ENCODE measurements at regions of chr11 and their contacts with region 1.

Region 1: GRCh38 chr11:133134314-133135173 is 397.8 kb downstream of the OPCML start:
- DNase-seq: peak; percentile 0
- H3K4me3 Mint-ChIP-seq: no peak overlapping the region
- H3K27ac Mint-ChIP-seq: no peak overlapping the region
- H3K4me1 Mint-ChIP-seq: no peaks in the 10 kb centered on the region
- H3K27me3 Mint-ChIP-seq: no peaks in the 10 kb centered on the region
- CTCF ChIP-seq: peak; percentile 57

Region 2: GRCh38 chr11:132948252-132948651 is 186.3 kb before region 1 on chr11:
- CTCF ChIA-PET with region 1: no interaction called
- POLR2A ChIA-PET with region 1: no interaction called
- intact Hi-C with region 1: no loop called
- DNase-seq: no peak
- H3K4me3 Mint-ChIP-seq: no peak overlapping the region
- H3K27ac Mint-ChIP-seq: no peak overlapping the region
- H3K4me1 Mint-ChIP-seq: no peaks in the 10 kb centered on the region
- H3K27me3 Mint-ChIP-seq: no peaks in the 10 kb centered on the region
- CTCF ChIP-seq: no peak

Region 3: DNA sequence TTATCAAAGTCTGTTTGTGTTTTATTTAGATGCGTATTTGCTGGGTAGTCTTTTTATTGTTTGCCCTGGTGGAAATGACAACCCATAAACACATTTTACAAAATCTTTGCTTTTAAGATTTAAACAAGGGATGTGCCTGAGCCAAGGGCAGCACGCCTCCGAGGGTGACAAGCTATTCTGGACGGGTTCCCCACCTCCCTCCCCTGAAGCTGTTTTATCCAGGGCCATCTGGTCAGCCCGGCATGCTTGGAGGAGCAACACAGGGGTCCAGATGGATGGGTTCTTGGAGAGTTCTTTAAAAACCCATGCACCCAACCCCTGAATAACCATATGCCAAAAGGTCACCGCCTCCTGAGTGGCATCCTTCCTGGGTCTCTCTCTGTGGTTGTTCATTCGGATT is 11.2 kb before region 1 on chr11:
- CTCF ChIA-PET with region 1: interaction called, 12 read pairs
- POLR2A ChIA-PET with region 1: no interaction called
- intact Hi-C with region 1: no loop called
- DNase-seq: no peak
- H3K4me3 Mint-ChIP-seq: no peak overlapping the region
- H3K27ac Mint-ChIP-seq: no peak overlapping the region
- H3K4me1 Mint-ChIP-seq: no peaks in the 10 kb centered on the region
- H3K27me3 Mint-ChIP-seq: no peaks in the 10 kb centered on the region
- CTCF ChIP-seq: no peak

Region 4: GRCh38 chr11:133156986-133157745 is 22.6 kb after region 1 on chr11:
- CTCF ChIA-PET with region 1: interaction called, 19 read pairs
- POLR2A ChIA-PET with region 1: no interaction called
- intact Hi-C with region 1: no loop called
- DNase-seq: no peak
- H3K4me3 Mint-ChIP-seq: no peak overlapping the region
- H3K27ac Mint-ChIP-seq: no peak overlapping the region
- H3K4me1 Mint-ChIP-seq: no peaks in the 10 kb centered on the region
- H3K27me3 Mint-ChIP-seq: peaks cover 28% of the 10 kb centered on the region
- CTCF ChIP-seq: no peak

Region 5: GRCh38 chr11:133821776-133822175 is 687.2 kb after region 1 on chr11:
- CTCF ChIA-PET with region 1: interaction called, 29 read pairs
- POLR2A ChIA-PET with region 1: no interaction called
- intact Hi-C with region 1: loop called (anchors 1 kb)
- DNase-seq: peak; percentile 36
- H3K4me3 Mint-ChIP-seq: no peak overlapping the region
- H3K27ac Mint-ChIP-seq: no peak overlapping the region
- H3K4me1 Mint-ChIP-seq: peaks cover 6% of the 10 kb centered on the region
- H3K27me3 Mint-ChIP-seq: peaks cover 20% of the 10 kb centered on the region
- CTCF ChIP-seq: peak; percentile 63

Measured in MCF 10A (cell line).